ENCODE measurements at regions of chr9 and their contacts with region 1.

Region 1: DNA sequence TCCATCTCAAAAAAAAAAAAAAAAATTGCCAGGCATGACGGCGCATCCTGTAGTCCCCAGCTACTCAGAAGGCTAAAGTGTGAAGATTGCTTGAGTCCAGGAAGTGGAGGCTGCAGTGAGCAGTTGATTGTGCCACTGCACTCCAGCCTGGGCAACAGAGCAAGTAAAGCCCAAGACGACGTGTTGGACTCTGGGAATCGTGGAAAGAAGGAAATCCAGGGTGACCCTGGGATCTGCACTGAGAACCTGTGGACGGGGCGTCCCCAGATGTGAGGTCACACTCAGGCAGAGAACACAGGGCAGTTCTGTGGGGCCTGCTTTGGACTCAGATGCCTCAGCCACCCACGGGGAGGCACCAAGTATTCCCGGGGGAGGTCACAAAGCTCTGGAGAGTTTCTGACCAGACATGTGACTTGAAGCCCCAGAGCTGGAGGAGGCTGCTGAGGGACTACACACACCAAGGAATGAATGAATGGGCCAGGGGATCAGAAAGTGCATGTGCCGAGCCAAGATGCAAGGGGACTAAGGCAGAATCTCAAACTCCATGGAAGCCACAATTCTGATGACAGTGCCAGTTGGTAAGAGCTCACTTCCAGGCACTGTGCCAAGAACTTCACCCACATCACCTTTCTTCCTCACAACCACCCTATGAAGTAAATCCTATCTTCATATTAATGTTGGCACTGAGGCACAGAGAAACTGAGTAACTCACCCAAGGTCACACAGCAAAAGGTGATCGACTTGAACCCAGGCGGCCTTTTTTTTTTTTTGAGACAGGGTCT is 12.9 kb downstream of the DYNC2I2 start:
- DNase-seq: no peak
- ATAC-seq: no peak
- H3K4me3 ChIP-seq: no peak overlapping the region
- H3K4me3 Mint-ChIP-seq: no peak overlapping the region
- H3K27ac ChIP-seq: no peak overlapping the region
- H3K27ac Mint-ChIP-seq: no peak overlapping the region
- H3K4me1 ChIP-seq: no peaks in the 10 kb centered on the region
- H3K4me1 Mint-ChIP-seq: no peaks in the 10 kb centered on the region
- H3K27me3 ChIP-seq: no peaks in the 10 kb centered on the region
- H3K27me3 Mint-ChIP-seq: no peaks in the 10 kb centered on the region
- CTCF ChIP-seq: no peak

Region 2: DNA sequence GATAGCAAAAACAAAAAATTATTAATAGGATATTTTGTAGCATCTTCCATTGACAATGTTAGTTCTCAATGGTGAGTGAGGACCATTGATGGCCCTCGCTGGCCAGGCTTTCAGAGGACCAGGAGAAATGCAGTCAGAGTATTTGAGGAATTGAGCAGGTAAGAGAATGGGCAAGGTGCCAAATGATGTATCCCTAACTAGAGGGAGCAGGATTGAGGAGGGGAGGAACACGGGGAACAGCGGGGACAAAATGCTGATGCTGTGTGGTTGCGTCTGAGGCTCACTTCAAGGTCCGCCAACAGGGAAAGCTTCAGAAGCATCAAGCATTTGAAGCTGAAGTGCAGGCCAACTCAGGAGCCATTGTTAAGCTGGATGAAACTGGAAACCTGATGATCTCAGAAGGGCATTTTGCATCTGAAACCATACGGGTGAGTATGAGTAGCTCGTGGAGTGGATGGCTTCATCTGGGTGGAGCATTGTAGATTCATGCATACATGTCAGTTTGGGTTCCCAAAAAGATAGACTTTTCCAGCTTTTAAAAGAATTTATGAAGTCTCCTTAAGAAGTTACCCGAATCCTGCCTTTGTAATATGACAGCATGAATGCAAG is 75.1 kb before region 1 on chr9:
- CTCF ChIA-PET with region 1: no interaction called
- POLR2A ChIA-PET with region 1: no interaction called
- intact Hi-C with region 1: no loop called
- DNase-seq: no peak
- ATAC-seq: no peak
- H3K4me3 ChIP-seq: no peak overlapping the region
- H3K4me3 Mint-ChIP-seq: no peak overlapping the region
- H3K27ac ChIP-seq: no peak overlapping the region
- H3K27ac Mint-ChIP-seq: no peak overlapping the region
- H3K4me1 ChIP-seq: peaks cover 4% of the 10 kb centered on the region
- H3K4me1 Mint-ChIP-seq: peaks cover 39% of the 10 kb centered on the region
- H3K27me3 ChIP-seq: no peaks in the 10 kb centered on the region
- H3K27me3 Mint-ChIP-seq: no peaks in the 10 kb centered on the region
- CTCF ChIP-seq: no peak

Region 3: DNA sequence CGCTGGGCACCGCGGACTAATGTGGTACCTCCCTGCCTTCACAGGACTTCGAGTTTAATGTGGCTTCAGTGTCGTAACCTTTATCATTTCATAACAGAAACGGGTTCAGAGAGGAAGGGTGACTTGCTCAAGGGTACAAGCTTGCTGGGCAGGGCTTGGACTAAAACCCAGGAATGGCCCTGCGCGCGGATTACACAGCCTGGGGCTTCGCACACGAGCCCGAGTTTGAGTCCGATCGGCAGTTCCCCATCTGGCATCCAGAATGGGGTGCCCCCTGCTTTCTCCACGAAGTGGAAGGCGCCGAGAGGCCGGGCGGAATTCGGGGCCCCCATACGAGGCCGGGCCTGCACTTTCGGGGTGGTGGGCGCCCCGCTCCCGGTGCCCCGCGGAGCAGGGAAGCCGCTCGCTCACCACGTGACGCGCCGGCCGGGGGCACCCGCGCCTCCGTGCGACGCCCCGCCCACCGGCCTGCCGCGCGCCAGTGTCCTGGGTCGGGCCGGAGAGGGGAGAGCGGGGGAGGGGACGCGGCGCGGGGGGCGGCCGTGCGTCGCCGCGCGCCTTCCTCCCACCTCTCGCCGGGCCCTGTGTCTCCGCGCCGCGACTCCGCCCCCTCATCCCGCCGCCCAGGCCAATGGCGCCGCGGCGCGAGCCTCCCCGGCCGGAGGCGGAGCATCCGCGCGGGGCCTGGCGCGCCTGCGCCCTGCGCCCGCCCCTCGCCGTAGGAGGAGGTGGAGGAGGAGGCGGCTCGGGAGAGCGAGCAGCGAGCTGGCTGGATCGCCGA is 45.0 kb after region 1 on chr9 and contains the start of gene SET:
- CTCF ChIA-PET with region 1: interaction called, 3 read pairs
- POLR2A ChIA-PET with region 1: interaction called, 3 read pairs
- intact Hi-C with region 1: loop called in 1 of 2 experiments (anchors 5 kb)
- DNase-seq: peak; percentile 82 to 97 (median 92)
- ATAC-seq: peak; percentile 78
- H3K4me3 ChIP-seq: peak within 1 kb of the TSS; percentile 89
- H3K4me3 Mint-ChIP-seq: peak within 1 kb of the TSS; percentile 95
- H3K27ac ChIP-seq: peak within 1 kb of the TSS; percentile 84
- H3K27ac Mint-ChIP-seq: peak within 1 kb of the TSS; percentile 94
- H3K4me1 ChIP-seq: peaks cover 58% of the 10 kb centered on the region
- H3K4me1 Mint-ChIP-seq: peaks cover 59% of the 10 kb centered on the region
- H3K27me3 ChIP-seq: no peaks in the 10 kb centered on the region
- H3K27me3 Mint-ChIP-seq: no peaks in the 10 kb centered on the region
- CTCF ChIP-seq: no peak
- total RNA-seq, gene SET: 228 to 241 TPM

Region 4: GRCh38 chr9:128863647-128864046 is 219.9 kb after region 1 on chr9:
- CTCF ChIA-PET with region 1: no interaction called
- POLR2A ChIA-PET with region 1: no interaction called
- intact Hi-C with region 1: loop called in 1 of 2 experiments (anchors 1 kb)
- DNase-seq: peak; percentile 73 to 92 (median 82)
- ATAC-seq: peak; percentile 98
- H3K4me3 ChIP-seq: no peak overlapping the region
- H3K4me3 Mint-ChIP-seq: no peak overlapping the region
- H3K27ac ChIP-seq: no peak overlapping the region
- H3K27ac Mint-ChIP-seq: peak overlapping the region; percentile 36
- H3K4me1 ChIP-seq: peaks cover 5% of the 10 kb centered on the region
- H3K4me1 Mint-ChIP-seq: peaks cover 4% of the 10 kb centered on the region
- H3K27me3 ChIP-seq: no peaks in the 10 kb centered on the region
- H3K27me3 Mint-ChIP-seq: no peaks in the 10 kb centered on the region
- CTCF ChIP-seq: peak; percentile 92

Region 5: GRCh38 chr9:128927731-128928411 is 284.2 kb after region 1 on chr9:
- CTCF ChIA-PET with region 1: no interaction called
- POLR2A ChIA-PET with region 1: no interaction called
- intact Hi-C with region 1: loop called in 1 of 2 experiments (anchors 1 kb)
- DNase-seq: peak; percentile 38 to 77 (median 46)
- ATAC-seq: peak; percentile 84
- H3K4me3 ChIP-seq: no peak overlapping the region
- H3K4me3 Mint-ChIP-seq: no peak overlapping the region
- H3K27ac ChIP-seq: no peak overlapping the region
- H3K27ac Mint-ChIP-seq: no peak overlapping the region
- H3K4me1 ChIP-seq: peaks cover 16% of the 10 kb centered on the region
- H3K4me1 Mint-ChIP-seq: peaks cover 19% of the 10 kb centered on the region
- H3K27me3 ChIP-seq: no peaks in the 10 kb centered on the region
- H3K27me3 Mint-ChIP-seq: no peaks in the 10 kb centered on the region
- CTCF ChIP-seq: peak; percentile 98

Measured in CD4-positive, alpha-beta T cell (primary cell).